ENCODE measurements at regions of chr13 and their contacts with region 1.

Region 1: DNA sequence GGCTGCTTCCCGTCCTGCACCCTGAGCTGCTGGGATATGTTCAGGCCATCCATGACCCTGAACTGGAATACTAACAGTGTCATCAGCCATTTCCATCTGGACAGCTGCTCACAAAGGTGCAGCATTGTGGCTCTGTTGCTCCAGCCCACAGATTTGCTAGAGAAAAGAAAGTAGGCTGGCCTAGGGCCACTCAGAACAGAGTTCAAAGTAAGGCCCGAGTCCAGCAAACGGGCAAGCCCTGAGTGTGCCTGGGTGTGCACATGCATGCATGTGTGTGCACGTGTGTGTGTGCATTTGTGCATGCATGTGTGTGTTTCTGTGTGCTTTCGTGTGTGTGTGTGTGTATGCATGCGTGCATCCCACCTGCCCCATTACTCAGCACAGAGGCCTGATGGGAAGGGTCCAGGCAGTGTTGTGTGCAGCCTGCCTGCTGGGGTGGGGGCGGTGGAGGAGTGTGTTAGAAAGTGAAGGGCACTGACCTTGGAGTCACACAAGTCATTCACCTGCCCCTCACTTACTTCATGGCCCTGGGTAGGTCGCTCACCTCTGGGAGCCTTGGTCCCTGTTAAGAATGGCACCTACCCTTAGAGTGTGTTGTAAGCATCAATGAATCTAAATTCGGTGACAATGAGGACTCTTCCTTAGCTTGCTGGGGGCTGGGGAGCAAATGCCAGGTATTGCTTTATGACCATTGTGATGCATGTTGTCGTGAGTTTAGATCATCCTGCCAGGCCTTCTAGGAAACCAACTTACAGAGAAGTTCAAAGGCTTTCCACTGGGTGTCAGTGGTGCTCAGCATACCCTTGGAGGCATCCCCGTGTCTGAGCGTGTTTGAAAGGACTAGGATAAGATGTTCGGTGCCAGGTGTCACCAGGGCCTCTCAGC is 53.2 kb downstream of the GPR12 start:
- DNase-seq: peak in 4 of 5 donors; percentile 30 to 48 (median 42)
- H3K4me3 ChIP-seq: no peak overlapping the region
- H3K4me3 Mint-ChIP-seq: no peak overlapping the region
- H3K27ac ChIP-seq: no peak overlapping the region
- H3K27ac Mint-ChIP-seq: no peak overlapping the region
- H3K4me1 ChIP-seq: no peaks in the 10 kb centered on the region
- H3K4me1 Mint-ChIP-seq: peaks cover 0 to 4% (median 0%) of the 10 kb centered on the region in 4 donors
- H3K27me3 ChIP-seq: no peaks in the 10 kb centered on the region
- H3K27me3 Mint-ChIP-seq: peaks cover 2% of the 10 kb centered on the region in 2 donors

Region 2: DNA sequence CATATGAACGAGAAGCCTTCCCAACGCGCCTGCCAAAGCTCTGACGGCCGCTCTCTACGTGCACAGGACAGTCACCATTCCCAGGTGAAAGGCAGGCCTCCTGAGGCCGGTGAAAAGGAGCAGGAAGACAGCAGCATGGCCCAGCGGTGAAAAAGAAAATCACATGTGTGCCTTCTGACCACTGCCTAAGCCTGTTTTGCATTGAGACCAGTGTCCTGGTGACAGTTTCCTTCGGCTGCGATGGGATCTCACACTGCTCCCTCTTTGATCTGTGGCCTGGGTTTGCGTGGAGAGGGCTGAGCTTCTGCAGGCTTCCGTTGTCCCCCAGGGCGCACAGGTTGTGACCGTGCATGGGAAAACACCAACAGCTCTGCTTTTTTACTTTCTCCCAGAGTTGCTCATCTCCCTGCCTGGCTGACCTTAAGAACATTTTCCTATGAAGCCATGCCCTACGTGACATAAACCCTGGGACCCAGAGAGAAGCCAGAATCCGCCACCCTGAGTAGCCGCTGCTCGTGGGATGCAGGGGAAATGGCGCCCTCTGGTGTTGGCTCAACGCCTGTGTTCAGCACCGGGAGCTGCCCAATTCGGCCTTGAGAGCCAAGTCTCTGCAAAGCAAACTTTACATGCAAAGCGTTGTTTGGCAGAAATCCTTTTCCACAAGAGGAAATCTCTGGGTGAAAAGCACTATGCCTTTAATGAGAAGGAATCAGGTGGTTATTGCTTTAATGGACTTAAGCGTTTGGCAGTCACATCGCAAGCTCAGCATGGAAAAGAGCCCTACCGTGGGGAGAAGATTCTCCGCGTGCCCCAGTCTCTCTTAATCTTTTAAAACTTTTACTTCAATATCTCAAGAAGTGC is 165.4 kb after region 1 on chr13:
- CTCF ChIA-PET with region 1: interaction called, 30 read pairs
- POLR2A ChIA-PET with region 1: no interaction called
- intact Hi-C with region 1: loop called (anchors 1 kb)
- DNase-seq: peak in 4 of 5 donors; percentile 16 to 32 (median 26)
- H3K4me3 ChIP-seq: no peak overlapping the region
- H3K4me3 Mint-ChIP-seq: no peak overlapping the region
- H3K27ac ChIP-seq: no peak overlapping the region
- H3K27ac Mint-ChIP-seq: no peak overlapping the region
- H3K4me1 ChIP-seq: no peaks in the 10 kb centered on the region
- H3K4me1 Mint-ChIP-seq: no peaks in the 10 kb centered on the region
- H3K27me3 ChIP-seq: no peaks in the 10 kb centered on the region
- H3K27me3 Mint-ChIP-seq: peaks cover 5 to 8% of the 10 kb centered on the region in 2 donors

Region 3: GRCh38 chr13:27079421-27079958 is 372.1 kb after region 1 on chr13:
- CTCF ChIA-PET with region 1: no interaction called
- POLR2A ChIA-PET with region 1: no interaction called
- intact Hi-C with region 1: no loop called
- DNase-seq: no peak
- H3K4me3 ChIP-seq: no peak overlapping the region
- H3K4me3 Mint-ChIP-seq: no peak overlapping the region
- H3K27ac ChIP-seq: no peak overlapping the region
- H3K27ac Mint-ChIP-seq: no peak overlapping the region
- H3K4me1 ChIP-seq: no peaks in the 10 kb centered on the region
- H3K4me1 Mint-ChIP-seq: peaks cover 7 to 15% (median 9%) of the 10 kb centered on the region in 4 donors
- H3K27me3 ChIP-seq: no peaks in the 10 kb centered on the region
- H3K27me3 Mint-ChIP-seq: no peaks in the 10 kb centered on the region